H1 (cell line): ENCODE measurements at regions of chr1 and their contacts with region 1.

Region 1: DNA sequence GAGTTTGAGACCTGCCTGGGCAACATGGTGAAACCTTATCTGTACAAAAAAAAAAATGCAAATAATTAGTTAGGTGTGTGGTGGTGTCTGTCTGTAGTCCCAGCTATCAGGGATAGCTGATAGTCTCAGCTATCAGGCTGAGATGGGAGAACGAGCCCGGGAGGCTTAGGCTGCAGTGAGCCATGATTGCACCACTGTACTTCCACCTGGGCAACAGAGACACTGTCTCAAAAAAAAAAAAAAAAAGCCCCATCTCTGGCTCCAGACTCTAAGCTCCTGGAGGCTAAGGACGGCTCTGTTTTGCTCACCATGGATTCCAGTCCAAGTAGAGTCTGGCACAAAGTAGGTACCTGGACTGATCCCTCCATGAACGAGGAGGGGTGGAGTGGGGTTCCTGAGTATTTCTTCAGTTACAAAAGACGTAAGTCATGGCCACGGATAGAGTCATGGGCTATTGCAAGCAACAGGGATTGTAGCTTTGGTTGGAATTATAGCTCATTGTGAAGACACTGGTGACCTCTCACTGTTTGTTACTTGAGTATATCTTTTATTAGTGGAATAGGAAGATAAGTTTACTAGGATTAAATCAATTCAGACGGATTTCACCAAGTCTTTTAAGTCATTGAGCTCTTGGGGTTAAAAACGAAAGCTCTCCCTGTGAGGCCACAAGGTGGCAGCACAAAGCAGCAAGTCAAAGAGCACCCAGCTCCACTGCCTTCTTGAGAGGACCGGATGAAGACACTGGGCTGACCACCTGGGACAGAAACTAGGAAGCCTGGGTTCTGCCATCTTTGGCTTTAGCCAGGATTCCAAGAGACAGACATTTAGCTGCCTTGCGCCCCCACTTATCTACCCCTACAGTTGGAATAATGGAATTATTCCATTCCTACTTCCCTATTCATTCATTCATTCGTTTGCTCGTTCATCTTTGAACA is 35.6 kb upstream of the TMEM61 start:
- DNase-seq: peak; percentile 54 to 78
- H3K4me3 ChIP-seq: no peak overlapping the region
- H3K27ac ChIP-seq: no peak overlapping the region
- H3K4me1 ChIP-seq: no peaks in the 10 kb centered on the region
- H3K27me3 ChIP-seq: no peaks in the 10 kb centered on the region
- CTCF ChIP-seq: peak; percentile 62 to 92 (median 83)
- EP300 ChIP-seq: no peak
- POLR2A ChIP-seq: no peak
- RAD21 ChIP-seq: peak; percentile 86 to 93

Region 2: DNA sequence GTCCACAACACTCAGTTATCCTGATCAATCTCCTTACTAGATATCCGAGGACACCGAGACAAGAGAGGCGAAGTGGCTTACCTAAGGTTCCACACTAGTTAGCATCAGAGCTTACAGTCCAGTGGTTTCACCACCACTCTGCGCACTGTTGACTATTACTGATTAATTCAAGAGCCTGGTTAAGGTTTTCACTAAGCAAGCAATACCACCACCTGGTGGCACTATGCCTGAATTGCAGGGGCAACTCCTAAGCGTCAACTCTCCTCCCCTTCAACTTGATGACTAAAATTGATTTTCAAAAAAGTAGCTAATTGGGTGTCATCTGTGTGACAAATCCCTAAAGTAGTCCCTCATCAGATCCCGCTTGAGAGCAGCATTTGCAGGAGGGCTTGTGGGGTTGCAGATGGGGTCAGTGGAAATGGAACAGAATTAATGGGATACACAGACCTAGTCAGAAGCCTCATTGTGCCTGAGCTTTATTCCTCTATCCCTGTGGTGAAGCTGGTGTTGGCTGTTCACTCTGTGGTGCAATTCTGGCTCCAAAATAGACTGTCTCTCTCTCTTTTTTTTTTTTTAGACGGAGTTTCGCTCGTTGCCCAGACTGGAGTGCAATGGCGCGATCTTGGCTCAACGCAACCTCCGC is 152.9 kb before region 1 on chr1:
- CTCF ChIA-PET with region 1: no interaction called
- POLR2A ChIA-PET with region 1: no interaction called
- DNase-seq: peak in 1 of 2 experiments; percentile 94
- H3K4me3 ChIP-seq: no peak overlapping the region
- H3K27ac ChIP-seq: no peak overlapping the region
- H3K4me1 ChIP-seq: peaks cover 9 to 26% (median 18%) of the 10 kb centered on the region in 4 experiments
- H3K27me3 ChIP-seq: no peaks in the 10 kb centered on the region
- CTCF ChIP-seq: peak; percentile 62 to 86 (median 77)
- EP300 ChIP-seq: no peak
- POLR2A ChIP-seq: no peak
- RAD21 ChIP-seq: peak; percentile 88 to 91

Region 3: GRCh38 chr1:54886724-54887664 is 57.9 kb before region 1 on chr1 and contains the start of gene DHCR24:
- CTCF ChIA-PET with region 1: interaction called, 28 read pairs
- POLR2A ChIA-PET with region 1: interaction called, 3 read pairs
- DNase-seq: peak; percentile 49 to 90
- H3K4me3 ChIP-seq: peak within 1 kb of the TSS; percentile 77 to 99 (median 84)
- H3K27ac ChIP-seq: peak within 1 kb of the TSS; percentile 47; the same call in 1 of the 2 replicates
- H3K4me1 ChIP-seq: peaks cover 13 to 22% (median 19%) of the 10 kb centered on the region in 4 experiments
- H3K27me3 ChIP-seq: no peaks in the 10 kb centered on the region
- CTCF ChIP-seq: no peak
- EP300 ChIP-seq: no peak
- POLR2A ChIP-seq: peak in 1 of 2 experiments; percentile 65; a peak in 1 of 3 replicates
- RAD21 ChIP-seq: no peak
- total RNA-seq, gene DHCR24: 419 and 455 TPM in 2 replicates

Region 4: GRCh38 chr1:54965624-54966340 is 20.9 kb after region 1 on chr1:
- CTCF ChIA-PET with region 1: interaction called, 31 read pairs
- POLR2A ChIA-PET with region 1: interaction called, 3 read pairs
- DNase-seq: no peak
- H3K4me3 ChIP-seq: no peak overlapping the region
- H3K27ac ChIP-seq: no peak overlapping the region
- H3K4me1 ChIP-seq: peaks cover 0 to 14% (median 11%) of the 10 kb centered on the region in 4 experiments; a peak in 5 of 7 replicates
- H3K27me3 ChIP-seq: no peaks in the 10 kb centered on the region
- CTCF ChIP-seq: no peak
- EP300 ChIP-seq: no peak
- POLR2A ChIP-seq: no peak
- RAD21 ChIP-seq: no peak

Region 5: GRCh38 chr1:54980528-54981241 is 35.8 kb after region 1 on chr1 and contains the start of gene TMEM61:
- CTCF ChIA-PET with region 1: interaction called, 436 read pairs
- POLR2A ChIA-PET with region 1: no interaction called
- DNase-seq: peak in 1 of 2 experiments; percentile 66
- H3K4me3 ChIP-seq: peak within 1 kb of the TSS; percentile 39 to 66 (median 50)
- H3K27ac ChIP-seq: no peak within 1 kb of the TSS
- H3K4me1 ChIP-seq: peaks cover 4 to 8% (median 7%) of the 10 kb centered on the region in 4 experiments; a peak in 6 of 7 replicates
- H3K27me3 ChIP-seq: peaks cover 0 to 29% (median 18%) of the 10 kb centered on the region in 4 experiments; a peak in 6 of 7 replicates
- CTCF ChIP-seq: no peak
- EP300 ChIP-seq: no peak
- POLR2A ChIP-seq: no peak
- RAD21 ChIP-seq: no peak
- total RNA-seq, gene TMEM61: 0.50 and 0.54 TPM in 2 replicates

Region 6: GRCh38 chr1:55007625-55008024 is 62.7 kb after region 1 on chr1:
- CTCF ChIA-PET with region 1: interaction called, 511 read pairs
- POLR2A ChIA-PET with region 1: interaction called, 3 read pairs
- DNase-seq: no peak
- H3K4me3 ChIP-seq: no peak overlapping the region
- H3K27ac ChIP-seq: no peak overlapping the region
- H3K4me1 ChIP-seq: peaks cover 0 to 12% (median 3%) of the 10 kb centered on the region in 4 experiments; a peak in 4 of 7 replicates
- H3K27me3 ChIP-seq: peaks cover 0 to 5% (median 0%) of the 10 kb centered on the region in 4 experiments; a peak in 3 of 7 replicates
- CTCF ChIP-seq: no peak
- EP300 ChIP-seq: no peak
- POLR2A ChIP-seq: no peak
- RAD21 ChIP-seq: no peak

Region 7: DNA sequence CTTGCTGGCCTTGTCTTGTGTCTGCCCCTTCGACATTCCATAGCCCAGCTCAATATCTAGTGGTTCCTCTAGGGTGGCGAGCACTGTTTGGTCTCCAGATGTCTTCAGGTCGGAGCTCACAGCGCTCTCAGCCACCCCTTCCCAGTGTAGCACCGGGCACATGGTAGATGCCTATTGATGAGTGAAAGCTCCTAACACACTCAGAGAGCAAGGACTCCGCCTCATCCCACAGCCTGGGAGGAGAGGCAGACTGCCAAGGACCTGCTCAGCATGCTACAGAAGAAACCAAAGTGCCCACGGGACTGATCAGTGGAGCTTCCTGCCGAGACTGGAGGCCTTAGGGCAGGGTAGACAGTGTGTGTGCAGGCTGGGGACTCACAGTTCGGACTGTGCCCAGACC is 105.4 kb after region 1 on chr1:
- CTCF ChIA-PET with region 1: interaction called, 31 read pairs
- POLR2A ChIA-PET with region 1: no interaction called
- DNase-seq: no peak
- H3K4me3 ChIP-seq: no peak overlapping the region
- H3K27ac ChIP-seq: no peak overlapping the region
- H3K4me1 ChIP-seq: no peaks in the 10 kb centered on the region
- H3K27me3 ChIP-seq: no peaks in the 10 kb centered on the region
- CTCF ChIP-seq: no peak
- EP300 ChIP-seq: no peak
- POLR2A ChIP-seq: no peak
- RAD21 ChIP-seq: no peak